GM12878 (cell line): ENCODE measurements at regions of chr7 and their contacts with region 1.

Region 1: GRCh38 chr7:123797673-123798527 is 47.1 kb upstream of the HYAL4 start:
- DNase-seq: no peak
- ATAC-seq: peak; percentile 78
- H3K4me3 ChIP-seq: no peak overlapping the region
- H3K27ac ChIP-seq: no peak overlapping the region
- H3K4me1 ChIP-seq: no peaks in the 10 kb centered on the region
- H3K27me3 ChIP-seq: no peaks in the 10 kb centered on the region
- CTCF ChIP-seq: peak in 2 of 3 experiments; percentile 28 to 59; a peak in 3 of 6 replicates
- EP300 ChIP-seq: no peak
- POLR2A ChIP-seq: no peak
- RAD21 ChIP-seq: peak; percentile 88

Region 2: DNA sequence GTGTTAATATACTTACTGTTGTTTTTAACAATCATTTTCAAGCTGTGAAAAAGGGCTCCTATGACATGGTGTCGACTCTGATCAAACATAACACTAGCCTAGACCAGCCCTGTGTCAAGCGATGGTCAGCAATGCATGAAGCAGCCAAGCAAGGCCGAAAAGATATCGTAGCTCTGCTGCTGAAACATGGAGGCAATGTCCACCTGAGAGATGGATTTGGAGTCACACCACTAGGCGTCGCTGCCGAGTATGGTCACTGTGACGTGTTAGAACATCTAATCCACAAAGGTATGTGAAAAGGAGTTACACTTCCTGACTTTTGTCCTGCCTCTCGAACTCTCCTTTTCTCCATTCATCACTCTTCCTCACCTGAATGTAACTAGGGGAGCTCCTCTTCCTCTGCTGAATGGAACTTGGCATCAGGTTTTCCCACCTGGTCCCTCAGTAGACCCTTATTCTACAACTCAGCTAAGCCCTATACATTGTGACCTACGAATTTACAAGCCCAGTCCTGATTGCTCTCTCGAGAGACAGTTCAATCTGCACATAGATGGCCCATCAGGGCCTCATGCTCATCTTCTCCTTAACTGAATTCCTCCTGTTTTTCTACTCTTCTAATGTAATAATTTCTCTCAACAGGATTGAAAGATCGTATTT is 173.2 kb before region 1 on chr7:
- CTCF ChIA-PET with region 1: interaction called, 12 read pairs
- POLR2A ChIA-PET with region 1: no interaction called
- RAD21 ChIA-PET with region 1: no interaction called
- SMC1A ChIA-PET with region 1: interaction called, 5 read pairs
- in situ Hi-C with region 1: no loop called
- intact Hi-C with region 1: no loop called
- DNase-seq: peak; percentile 25
- ATAC-seq: peak; percentile 97
- H3K4me3 ChIP-seq: no peak overlapping the region
- H3K27ac ChIP-seq: no peak overlapping the region
- H3K4me1 ChIP-seq: no peaks in the 10 kb centered on the region
- H3K27me3 ChIP-seq: no peaks in the 10 kb centered on the region
- CTCF ChIP-seq: peak; percentile 68 to 94 (median 91)
- EP300 ChIP-seq: no peak
- POLR2A ChIP-seq: no peak
- RAD21 ChIP-seq: peak; percentile 40

Region 3: GRCh38 chr7:123748734-123749536 is 49.0 kb before region 1 on chr7 and contains the start of gene WASL:
- CTCF ChIA-PET with region 1: interaction called, 13 read pairs
- POLR2A ChIA-PET with region 1: interaction called, 3 read pairs
- RAD21 ChIA-PET with region 1: interaction called, 4 read pairs
- SMC1A ChIA-PET with region 1: interaction called, 19 read pairs
- in situ Hi-C with region 1: no loop called
- intact Hi-C with region 1: no loop called
- DNase-seq: peak; percentile 41
- ATAC-seq: peak; percentile 79
- H3K4me3 ChIP-seq: peak within 1 kb of the TSS; percentile 95
- H3K27ac ChIP-seq: peak within 1 kb of the TSS; percentile 95
- H3K4me1 ChIP-seq: no peaks in the 10 kb centered on the region
- H3K27me3 ChIP-seq: no peaks in the 10 kb centered on the region
- CTCF ChIP-seq: no peak; a peak in 1 of 6 replicates
- EP300 ChIP-seq: peak; percentile 51; a peak in 2 of 4 replicates
- POLR2A ChIP-seq: peak; percentile 93
- RAD21 ChIP-seq: no peak
- polyA plus RNA-seq, gene WASL: 2.0 to 2.1 TPM

Region 4: GRCh38 chr7:123787220-123788007 is 10.5 kb before region 1 on chr7:
- CTCF ChIA-PET with region 1: interaction called, 8 read pairs
- POLR2A ChIA-PET with region 1: no interaction called
- RAD21 ChIA-PET with region 1: interaction called, 6 read pairs
- SMC1A ChIA-PET with region 1: interaction called, 16 read pairs
- in situ Hi-C with region 1: no loop called
- intact Hi-C with region 1: no loop called
- DNase-seq: no peak
- ATAC-seq: no peak
- H3K4me3 ChIP-seq: no peak overlapping the region
- H3K27ac ChIP-seq: no peak overlapping the region
- H3K4me1 ChIP-seq: no peaks in the 10 kb centered on the region
- H3K27me3 ChIP-seq: no peaks in the 10 kb centered on the region
- CTCF ChIP-seq: no peak
- EP300 ChIP-seq: no peak
- POLR2A ChIP-seq: no peak
- RAD21 ChIP-seq: no peak

Region 5: DNA sequence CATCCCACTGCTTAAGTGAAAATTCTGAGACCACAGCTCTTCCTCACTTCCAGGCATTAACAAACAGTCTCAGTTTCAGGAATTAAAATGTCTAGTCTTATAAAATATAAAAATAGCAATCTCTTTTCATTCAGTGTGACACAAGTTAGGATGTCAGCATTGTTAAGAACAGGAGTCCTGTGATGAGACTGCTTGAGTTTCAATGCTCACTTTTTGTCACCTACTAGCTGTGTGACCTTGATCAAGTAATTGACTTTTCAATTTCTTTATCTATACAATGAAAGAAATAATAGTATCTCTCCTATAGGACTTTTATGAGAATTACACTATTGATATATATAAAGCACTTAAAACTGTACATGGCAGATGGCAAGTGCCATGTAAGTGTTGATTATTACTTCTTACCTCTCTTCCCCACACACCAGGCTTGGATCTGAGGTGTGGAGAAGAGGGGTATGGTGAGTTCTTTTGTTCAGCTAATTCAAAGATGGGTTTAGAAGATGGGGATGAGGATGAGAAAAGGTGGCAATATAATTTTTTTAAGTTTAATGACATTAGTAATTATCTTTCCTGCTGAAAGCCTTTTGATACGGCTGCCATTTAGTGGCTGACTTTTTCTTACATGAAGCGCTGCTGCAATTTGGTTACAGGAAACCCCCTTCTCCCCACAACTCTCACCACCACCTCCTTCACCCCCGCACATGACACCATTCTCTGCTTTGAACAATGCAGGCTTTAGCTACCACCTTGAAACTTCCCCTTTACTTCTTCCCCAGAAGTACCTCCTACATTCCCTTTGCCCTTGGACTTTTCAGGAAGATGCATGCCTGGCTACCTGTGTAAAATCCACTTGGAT is 26.2 kb after region 1 on chr7:
- CTCF ChIA-PET with region 1: interaction called, 40 read pairs
- POLR2A ChIA-PET with region 1: interaction called, 5 read pairs
- RAD21 ChIA-PET with region 1: interaction called, 12 read pairs
- SMC1A ChIA-PET with region 1: interaction called, 23 read pairs
- in situ Hi-C with region 1: no loop called
- intact Hi-C with region 1: no loop called
- DNase-seq: peak; percentile 42
- ATAC-seq: peak; percentile 97
- H3K4me3 ChIP-seq: no peak overlapping the region
- H3K27ac ChIP-seq: peak overlapping the region; percentile 71
- H3K4me1 ChIP-seq: peaks cover 11% of the 10 kb centered on the region
- H3K27me3 ChIP-seq: no peaks in the 10 kb centered on the region
- CTCF ChIP-seq: no peak
- EP300 ChIP-seq: peak in 1 of 2 experiments; percentile 56; a peak in 2 of 4 replicates
- POLR2A ChIP-seq: no peak
- RAD21 ChIP-seq: no peak

Region 6: DNA sequence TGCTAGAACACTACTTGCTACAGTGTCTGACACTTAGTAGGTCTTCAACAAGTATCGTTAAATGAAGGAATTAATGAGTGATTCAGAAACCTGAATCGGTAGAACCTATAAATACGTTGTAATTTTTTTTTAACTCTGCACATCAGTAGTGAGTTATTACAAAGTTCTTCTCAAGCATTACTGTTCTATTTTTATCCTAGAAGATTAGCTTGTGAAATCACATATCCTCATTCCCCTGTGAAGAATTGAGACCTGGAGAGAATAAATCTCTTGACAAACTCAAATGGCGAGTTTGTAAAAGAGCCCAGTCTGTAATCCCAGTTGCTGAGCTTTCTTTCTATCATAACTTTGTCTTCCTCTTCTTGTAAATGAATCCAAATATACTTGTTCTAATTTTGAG is 81.7 kb after region 1 on chr7:
- CTCF ChIA-PET with region 1: interaction called, 208 read pairs
- POLR2A ChIA-PET with region 1: no interaction called
- RAD21 ChIA-PET with region 1: interaction called, 3 read pairs
- SMC1A ChIA-PET with region 1: interaction called, 26 read pairs
- in situ Hi-C with region 1: no loop called
- intact Hi-C with region 1: no loop called
- DNase-seq: no peak
- ATAC-seq: no peak
- H3K4me3 ChIP-seq: no peak overlapping the region
- H3K27ac ChIP-seq: no peak overlapping the region
- H3K4me1 ChIP-seq: no peaks in the 10 kb centered on the region
- H3K27me3 ChIP-seq: no peaks in the 10 kb centered on the region
- CTCF ChIP-seq: no peak
- EP300 ChIP-seq: no peak
- POLR2A ChIP-seq: no peak
- RAD21 ChIP-seq: no peak